Panc1 (cell line): ENCODE measurements at regions of chr6 and their contacts with region 1.

Region 1: GRCh38 chr6:49531774-49532569 is 18.5 kb upstream of the C6orf141 start:
- DNase-seq: no peak
- ATAC-seq: peak; percentile 85
- H3K4me3 ChIP-seq: no peak overlapping the region
- H3K27ac ChIP-seq: no peak overlapping the region
- H3K4me1 ChIP-seq: no peaks in the 10 kb centered on the region
- H3K27me3 ChIP-seq: no peaks in the 10 kb centered on the region
- CTCF ChIP-seq: peak; percentile 77

Region 2: GRCh38 chr6:49479308-49479970 is 52.5 kb before region 1 on chr6:
- CTCF ChIA-PET with region 1: no interaction called
- POLR2A ChIA-PET with region 1: no interaction called
- in situ Hi-C with region 1: no loop called
- intact Hi-C with region 1: no loop called
- DNase-seq: no peak
- ATAC-seq: no peak
- H3K4me3 ChIP-seq: no peak overlapping the region
- H3K27ac ChIP-seq: no peak overlapping the region
- H3K4me1 ChIP-seq: no peaks in the 10 kb centered on the region
- H3K27me3 ChIP-seq: no peaks in the 10 kb centered on the region
- CTCF ChIP-seq: no peak

Region 3: DNA sequence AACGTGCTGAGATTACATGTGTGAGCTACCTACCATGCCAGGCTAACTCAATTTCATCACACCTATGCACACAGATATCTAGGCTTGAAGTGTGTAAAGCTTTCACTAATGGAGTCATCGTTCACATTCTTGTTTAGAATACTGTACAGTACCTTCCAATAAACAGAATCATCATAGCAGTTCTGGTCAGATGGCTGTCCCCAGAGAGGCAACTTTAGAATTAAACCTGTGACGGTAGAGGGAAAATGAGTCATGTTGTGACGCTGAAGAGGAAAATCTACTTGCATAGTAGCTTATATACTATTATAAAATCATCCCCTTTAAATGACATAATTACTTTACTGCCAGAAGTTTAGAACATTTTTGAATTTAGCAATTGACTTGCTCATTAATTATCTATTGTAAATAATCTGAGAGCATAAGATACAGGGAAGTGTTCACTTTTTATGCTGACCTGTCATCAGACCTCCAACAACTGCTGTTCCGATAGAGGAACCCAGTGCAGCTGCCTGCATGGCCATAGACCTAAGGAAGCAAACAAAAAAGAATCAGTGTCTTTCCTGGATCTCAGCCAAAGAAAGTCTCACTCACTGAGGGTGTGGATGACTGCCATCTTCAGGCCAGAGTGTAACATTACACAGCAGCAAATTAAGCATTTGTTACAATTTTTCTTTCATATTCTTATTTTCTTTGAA is 74.9 kb after region 1 on chr6:
- CTCF ChIA-PET with region 1: interaction called, 5 read pairs
- POLR2A ChIA-PET with region 1: no interaction called
- in situ Hi-C with region 1: no loop called
- intact Hi-C with region 1: loop called (anchors 1 kb)
- DNase-seq: peak; percentile 52
- ATAC-seq: 0 out of 2 replicates have a peak, but pooled peaks have one; percentile 51
- H3K4me3 ChIP-seq: no peak overlapping the region
- H3K27ac ChIP-seq: no peak overlapping the region
- H3K4me1 ChIP-seq: no peaks in the 10 kb centered on the region
- H3K27me3 ChIP-seq: no peaks in the 10 kb centered on the region; the same call in 1 of the 2 replicates
- CTCF ChIP-seq: peak; percentile 84

Region 4: GRCh38 chr6:49933526-49933925 is 401.6 kb after region 1 on chr6:
- CTCF ChIA-PET with region 1: no interaction called
- POLR2A ChIA-PET with region 1: no interaction called
- in situ Hi-C with region 1: no loop called
- intact Hi-C with region 1: no loop called
- DNase-seq: no peak
- ATAC-seq: no peak
- H3K4me3 ChIP-seq: no peak overlapping the region
- H3K27ac ChIP-seq: no peak overlapping the region
- H3K4me1 ChIP-seq: no peaks in the 10 kb centered on the region
- H3K27me3 ChIP-seq: no peaks in the 10 kb centered on the region
- CTCF ChIP-seq: no peak

Region 5: GRCh38 chr6:50030777-50031562 is 499.0 kb after region 1 on chr6:
- CTCF ChIA-PET with region 1: interaction called, 10 read pairs
- POLR2A ChIA-PET with region 1: no interaction called
- in situ Hi-C with region 1: no loop called
- intact Hi-C with region 1: no loop called
- DNase-seq: no peak
- ATAC-seq: peak; percentile 75; the same call in 1 of the 2 replicates
- H3K4me3 ChIP-seq: peak overlapping the region in 1 of 2 experiments; percentile 25; a peak in 1 of 4 replicates
- H3K27ac ChIP-seq: no peak overlapping the region
- H3K4me1 ChIP-seq: no peaks in the 10 kb centered on the region
- H3K27me3 ChIP-seq: no peaks in the 10 kb centered on the region
- CTCF ChIP-seq: peak; percentile 66